Calu3 (cell line): ENCODE measurements at regions of chr10 and their contacts with region 1.

Region 1: DNA sequence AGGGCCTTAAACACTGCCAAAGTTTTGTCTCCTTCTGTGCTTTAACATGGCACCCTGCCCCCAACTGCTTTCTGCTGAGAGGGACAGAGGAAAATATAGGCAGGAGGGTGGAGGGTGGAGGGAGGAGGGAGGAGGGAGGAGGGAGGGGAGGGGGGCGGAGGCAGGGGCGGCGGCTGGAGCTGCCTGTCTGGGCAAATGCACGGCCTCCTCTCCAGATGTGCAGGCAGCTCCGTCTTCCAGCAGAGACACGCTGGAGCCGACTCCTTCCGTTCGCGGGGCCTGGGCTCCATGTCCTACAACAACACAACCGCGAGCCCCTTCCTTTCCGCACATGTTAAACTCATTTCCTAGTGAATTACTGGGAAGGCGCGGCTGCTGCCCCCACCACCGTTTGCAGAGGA is 14.2 kb downstream of the EBF3 start:
- DNase-seq: no peak
- H3K4me3 Mint-ChIP-seq: no peak overlapping the region
- H3K27ac Mint-ChIP-seq: no peak overlapping the region
- H3K4me1 Mint-ChIP-seq: no peaks in the 10 kb centered on the region
- H3K27me3 Mint-ChIP-seq: no peaks in the 10 kb centered on the region
- CTCF ChIP-seq: no peak

Region 2: GRCh38 chr10:129174232-129175014 is 775.5 kb before region 1 on chr10:
- CTCF ChIA-PET with region 1: no interaction called
- intact Hi-C with region 1: no loop called
- DNase-seq: no peak
- H3K4me3 Mint-ChIP-seq: no peak overlapping the region
- H3K27ac Mint-ChIP-seq: no peak overlapping the region
- H3K4me1 Mint-ChIP-seq: no peaks in the 10 kb centered on the region
- H3K27me3 Mint-ChIP-seq: no peaks in the 10 kb centered on the region
- CTCF ChIP-seq: no peak

Region 3: DNA sequence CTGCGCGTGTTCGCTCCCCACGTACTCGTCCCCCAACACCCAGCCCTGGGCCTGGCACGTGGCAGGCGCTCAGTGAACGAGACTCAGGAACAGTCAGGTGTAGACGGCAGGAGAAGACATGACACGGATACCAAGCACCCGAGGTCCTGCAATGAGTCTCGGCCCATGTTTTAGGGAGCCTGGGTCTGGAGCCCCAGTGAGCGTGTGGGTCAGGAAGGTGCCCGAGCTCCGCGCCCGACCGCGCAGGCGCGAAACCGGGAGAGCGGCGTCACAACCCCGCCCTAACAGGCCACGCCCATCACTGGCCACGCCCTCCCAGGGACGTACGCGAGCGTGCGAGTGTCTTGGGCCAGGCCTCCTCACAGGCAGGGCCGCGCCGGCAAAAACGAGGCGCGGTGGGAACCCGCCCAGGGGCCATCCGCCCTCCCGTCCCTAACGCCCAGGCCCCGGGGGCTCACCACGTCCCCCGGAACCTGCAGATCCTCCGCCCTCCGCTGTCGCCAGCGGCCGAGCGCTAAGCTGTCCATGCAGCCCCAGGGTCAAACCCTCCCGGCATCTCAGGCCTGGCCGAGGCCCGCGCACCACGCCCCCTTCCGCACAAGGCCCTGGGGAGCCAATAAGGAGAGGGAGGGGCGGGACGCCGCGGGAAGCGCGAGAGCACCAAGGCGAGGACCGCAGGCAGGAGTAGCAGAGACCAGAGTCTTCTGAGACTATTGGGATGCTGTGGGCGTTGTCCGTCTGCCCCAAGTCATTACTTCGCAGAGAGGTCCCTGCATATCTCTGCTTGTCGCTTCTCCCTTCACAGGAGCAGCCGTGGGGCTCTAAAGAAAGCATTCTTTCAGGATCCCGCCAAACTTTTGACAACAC is 160.6 kb after region 1 on chr10 and contains the start of gene C10orf143:
- CTCF ChIA-PET with region 1: no interaction called
- intact Hi-C with region 1: loop called (anchors 10 kb)
- DNase-seq: peak; percentile 94
- H3K4me3 Mint-ChIP-seq: peak within 1 kb of the TSS; percentile 95
- H3K27ac Mint-ChIP-seq: peak within 1 kb of the TSS; percentile 85
- H3K4me1 Mint-ChIP-seq: peaks cover 10% of the 10 kb centered on the region
- H3K27me3 Mint-ChIP-seq: no peaks in the 10 kb centered on the region
- CTCF ChIP-seq: no peak
- total RNA-seq, gene C10orf143: 0.50 and 0.78 TPM in 2 replicates